ENCODE measurements at regions of chr14 and their contacts with region 1.

Region 1: DNA sequence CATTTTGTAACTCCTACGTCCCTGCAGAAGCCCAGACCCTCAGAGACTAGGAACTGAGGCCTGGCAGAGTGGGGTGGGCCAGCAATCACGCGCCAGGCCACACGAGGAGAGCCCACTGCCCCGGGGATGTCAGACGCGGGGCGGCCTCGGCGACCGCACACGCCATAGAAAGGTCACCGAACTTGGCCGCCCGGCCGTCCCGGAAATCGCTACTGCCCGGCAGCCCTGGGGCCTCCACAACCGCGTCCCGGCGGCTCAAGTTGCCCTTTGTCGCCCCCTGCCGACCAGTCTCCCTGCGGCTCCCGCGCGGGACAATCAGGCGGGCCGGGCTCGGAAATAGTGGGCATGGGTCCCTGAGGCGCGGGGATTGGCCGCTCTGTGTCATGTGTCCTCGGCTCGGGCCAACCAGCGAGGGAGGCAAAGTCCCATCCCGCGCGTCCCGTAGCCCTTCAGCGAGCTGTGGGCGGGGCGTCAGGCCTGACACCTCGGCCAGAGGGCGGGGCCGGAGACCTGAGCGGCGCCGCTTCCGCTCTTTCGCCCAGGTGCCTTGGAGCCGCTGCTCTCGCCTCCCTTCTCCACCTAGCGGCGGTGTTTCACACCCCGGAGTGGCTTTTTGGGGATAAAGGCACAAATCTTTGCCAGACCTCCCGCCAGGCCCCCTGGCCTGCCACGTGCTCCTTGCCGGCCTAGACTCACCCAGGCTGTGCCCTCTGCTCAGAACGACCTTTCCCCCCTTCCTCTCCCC is 33.4 kb upstream of the DEGS2 start:
- H3K4me3 Mint-ChIP-seq: peak overlapping the region; percentile 82
- H3K27ac Mint-ChIP-seq: peak overlapping the region; percentile 96
- H3K4me1 Mint-ChIP-seq: peaks cover 20% of the 10 kb centered on the region
- H3K27me3 Mint-ChIP-seq: no peaks in the 10 kb centered on the region

Region 2: DNA sequence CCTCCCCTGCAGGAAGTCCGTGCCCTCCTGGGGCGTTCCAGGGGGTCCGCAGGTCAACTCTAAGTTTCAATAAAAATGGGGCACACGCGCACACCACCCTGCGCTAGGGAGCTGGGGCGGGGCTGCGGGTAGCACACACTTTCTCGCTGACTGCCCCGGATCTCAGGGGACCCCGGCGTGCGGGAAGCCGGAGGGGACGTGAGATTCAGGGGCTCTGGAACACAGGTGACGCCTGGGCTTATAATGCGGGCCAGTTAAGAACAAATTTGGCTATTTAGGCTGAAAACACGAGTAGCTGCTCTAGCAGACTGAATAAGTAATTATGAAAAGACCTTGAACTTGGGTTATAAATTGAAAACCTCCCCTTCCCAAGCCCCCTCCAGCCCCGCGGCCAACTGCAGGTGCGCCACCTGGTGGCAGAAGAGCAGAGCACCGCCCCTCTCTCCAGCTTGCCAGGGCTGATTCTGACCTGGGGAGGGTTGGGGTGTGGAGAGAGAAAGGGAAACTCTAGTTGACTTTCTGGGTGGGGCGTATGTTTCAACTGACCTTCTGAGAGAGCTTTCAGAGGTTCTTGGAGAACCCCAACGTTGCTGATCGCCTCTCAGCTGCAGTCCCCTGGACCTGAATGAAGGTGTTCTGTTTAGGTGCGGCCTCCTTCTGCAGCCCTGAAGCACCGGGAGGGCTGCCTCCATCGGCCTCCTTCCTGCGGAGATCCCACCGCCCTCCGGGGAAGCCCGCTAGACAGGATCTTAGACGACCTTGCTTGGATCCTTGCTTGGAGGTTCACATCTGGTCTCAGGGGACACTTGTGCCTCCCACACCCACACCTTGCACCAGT is 246.0 kb before region 1 on chr14:
- intact Hi-C with region 1: no loop called
- H3K4me3 Mint-ChIP-seq: no peak overlapping the region
- H3K27ac Mint-ChIP-seq: no peak overlapping the region
- H3K4me1 Mint-ChIP-seq: peaks cover 6% of the 10 kb centered on the region
- H3K27me3 Mint-ChIP-seq: peaks cover 35% of the 10 kb centered on the region

Region 3: DNA sequence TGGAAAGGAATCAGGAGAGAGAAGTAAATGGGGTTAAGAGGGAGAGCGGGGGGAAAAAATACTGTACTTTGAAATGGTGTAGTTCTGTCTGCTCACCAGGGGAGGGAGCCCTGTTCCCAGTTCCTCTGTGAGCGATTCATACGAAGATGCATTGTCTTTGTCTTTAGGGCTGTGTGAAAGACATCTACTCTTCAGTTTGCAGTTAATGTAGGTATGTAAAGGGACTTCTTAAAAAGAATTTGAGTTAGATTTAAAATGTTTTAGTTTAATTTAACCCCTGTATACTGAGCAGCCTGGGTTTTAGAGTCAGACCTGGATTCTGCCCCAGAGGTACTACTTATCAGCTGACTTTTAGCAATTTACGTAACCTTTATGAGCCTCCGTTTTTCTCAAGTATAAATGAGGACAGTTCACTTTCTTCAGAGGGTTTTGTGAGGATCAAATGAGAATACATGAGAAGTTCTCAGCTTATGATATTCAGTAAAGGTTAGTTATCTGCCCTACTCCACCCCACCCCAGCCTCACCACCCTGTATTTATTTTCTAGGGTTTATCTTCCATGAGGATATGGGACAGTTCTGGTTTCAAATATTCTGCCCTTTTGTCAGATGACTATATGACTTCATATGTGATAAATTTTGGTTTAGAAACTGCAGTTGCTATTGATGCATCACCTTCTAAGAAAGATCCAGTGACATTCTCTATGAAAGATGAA is 210.2 kb before region 1 on chr14:
- intact Hi-C with region 1: loop called (anchors 1 kb)
- H3K4me3 Mint-ChIP-seq: no peak overlapping the region
- H3K27ac Mint-ChIP-seq: no peak overlapping the region
- H3K4me1 Mint-ChIP-seq: peaks cover 10% of the 10 kb centered on the region
- H3K27me3 Mint-ChIP-seq: peaks cover 2% of the 10 kb centered on the region

Region 4: GRCh38 chr14:100056964-100057795 is 135.7 kb before region 1 on chr14:
- intact Hi-C with region 1: loop called (anchors 5 kb)
- H3K4me3 Mint-ChIP-seq: no peak overlapping the region
- H3K27ac Mint-ChIP-seq: no peak overlapping the region
- H3K4me1 Mint-ChIP-seq: peaks cover 26% of the 10 kb centered on the region
- H3K27me3 Mint-ChIP-seq: no peaks in the 10 kb centered on the region

Region 5: DNA sequence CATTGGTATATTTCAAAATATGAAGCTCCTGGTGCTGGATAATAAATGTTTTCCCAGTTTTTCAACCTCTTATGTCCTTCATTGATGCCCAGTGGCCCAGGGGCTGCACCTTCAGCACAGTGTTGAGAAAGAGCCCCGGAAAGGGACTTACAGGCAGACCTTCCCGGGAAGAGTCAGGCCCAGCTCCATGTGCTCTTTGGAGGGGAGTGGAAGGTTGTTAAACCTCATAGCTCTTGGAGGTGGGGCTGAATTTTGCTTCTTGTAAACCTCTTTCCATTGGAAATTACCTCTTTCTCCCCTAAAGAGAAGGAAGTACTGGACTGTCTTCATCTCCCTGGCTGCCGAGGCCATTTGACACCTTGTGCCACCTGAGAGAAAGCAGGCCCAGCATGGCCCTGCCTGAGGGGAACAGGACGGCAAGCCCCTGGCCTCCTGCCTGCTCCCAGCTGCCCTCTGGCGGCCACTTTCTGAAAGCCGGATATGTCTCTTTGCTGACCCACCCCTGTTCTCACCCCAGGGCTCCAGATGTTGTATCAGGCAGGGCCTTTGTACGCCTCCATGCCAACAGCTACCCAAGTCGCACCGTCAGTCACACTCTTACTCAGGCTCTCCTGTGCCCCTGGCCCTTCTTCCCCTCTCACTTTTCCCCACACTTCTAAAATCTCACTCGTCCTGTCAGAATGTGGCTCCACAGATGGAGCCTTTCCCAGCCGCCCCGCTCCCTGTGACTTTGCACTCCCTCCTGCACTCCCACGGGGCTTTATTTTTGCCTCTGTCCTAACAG is 84.6 kb before region 1 on chr14:
- intact Hi-C with region 1: loop called (anchors 1 kb)
- H3K4me3 Mint-ChIP-seq: no peak overlapping the region
- H3K27ac Mint-ChIP-seq: peak overlapping the region; percentile 43
- H3K4me1 Mint-ChIP-seq: peaks cover 73% of the 10 kb centered on the region
- H3K27me3 Mint-ChIP-seq: no peaks in the 10 kb centered on the region

Region 6: DNA sequence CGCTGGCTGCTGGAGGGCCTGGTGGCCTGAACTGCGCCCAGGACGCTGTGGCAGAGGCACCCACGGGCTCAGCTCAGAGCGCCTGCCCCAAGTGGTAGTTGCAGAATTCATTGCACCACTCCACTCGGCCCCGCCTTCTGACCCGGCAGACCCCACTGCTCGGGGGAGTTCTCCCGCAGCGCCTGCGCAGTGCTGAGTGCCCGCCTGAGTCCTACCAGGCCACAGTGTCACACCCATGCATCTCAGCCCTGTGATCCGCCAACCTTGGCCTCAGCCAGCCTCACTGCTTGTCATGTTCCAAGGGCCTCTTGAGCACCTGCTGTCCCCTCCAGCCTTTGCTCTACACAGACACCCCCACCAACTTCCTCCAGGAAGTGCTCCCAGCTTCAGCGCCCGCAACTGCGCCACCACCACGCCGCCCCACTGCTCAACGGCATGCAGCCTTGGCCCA is 45.6 kb before region 1 on chr14:
- intact Hi-C with region 1: loop called (anchors 2 kb)
- H3K4me3 Mint-ChIP-seq: peak overlapping the region; percentile 24
- H3K27ac Mint-ChIP-seq: no peak overlapping the region
- H3K4me1 Mint-ChIP-seq: peaks cover 37% of the 10 kb centered on the region
- H3K27me3 Mint-ChIP-seq: peaks cover 2% of the 10 kb centered on the region

Region 7: GRCh38 chr14:100213956-100214774 is 21.3 kb after region 1 on chr14:
- intact Hi-C with region 1: loop called (anchors 2 kb)
- H3K4me3 Mint-ChIP-seq: peak overlapping the region; percentile 78
- H3K27ac Mint-ChIP-seq: peak overlapping the region; percentile 91
- H3K4me1 Mint-ChIP-seq: peaks cover 35% of the 10 kb centered on the region
- H3K27me3 Mint-ChIP-seq: no peaks in the 10 kb centered on the region

Region 8: GRCh38 chr14:100285021-100285912 is 92.4 kb after region 1 on chr14:
- intact Hi-C with region 1: no loop called
- H3K4me3 Mint-ChIP-seq: peak overlapping the region; percentile 77
- H3K27ac Mint-ChIP-seq: peak overlapping the region; percentile 77
- H3K4me1 Mint-ChIP-seq: peaks cover 21% of the 10 kb centered on the region
- H3K27me3 Mint-ChIP-seq: peaks cover 5% of the 10 kb centered on the region